GM10248 (cell line): ENCODE measurements at regions of chr9 and their contacts with region 1.

Region 1: DNA sequence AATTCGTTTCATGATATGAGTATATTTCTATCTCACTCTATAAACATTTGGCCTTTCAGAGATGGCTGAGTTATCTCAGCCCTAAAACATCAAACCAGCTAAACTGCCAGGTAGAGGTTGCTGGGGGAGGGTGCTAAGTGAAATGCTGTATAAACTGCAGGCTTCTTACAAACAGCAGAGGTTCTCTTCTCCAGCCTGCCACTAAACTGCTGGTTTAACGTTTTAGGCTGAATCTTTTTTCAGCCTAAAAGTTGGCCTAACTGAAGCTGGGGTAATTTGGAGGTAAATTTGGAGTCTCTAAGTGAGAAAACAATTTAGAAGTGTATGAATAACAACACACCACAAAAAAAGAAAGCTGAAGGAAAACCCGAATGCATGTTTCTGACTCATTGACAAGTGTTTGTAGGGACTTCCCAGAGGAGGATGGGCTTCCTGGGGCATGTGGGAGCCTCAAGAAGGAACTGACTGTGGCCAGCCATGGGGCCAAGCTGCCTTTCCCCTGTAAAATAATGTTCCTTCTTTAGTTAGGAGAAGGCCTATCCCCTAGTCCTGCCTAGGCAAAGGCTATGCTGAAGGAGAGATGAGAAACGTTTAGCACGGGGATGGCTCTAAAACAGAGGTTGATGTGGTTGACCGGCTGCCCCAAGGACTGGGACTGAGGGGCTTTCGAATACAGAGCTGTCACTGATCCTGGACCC is 44.3 kb downstream of the SLC28A3 start:
- DNase-seq: peak; percentile 50
- CTCF ChIP-seq: no peak

Region 2: GRCh38 chr9:84230355-84231145 is 65.7 kb before region 1 on chr9:
- CTCF ChIA-PET with region 1: no interaction called
- POLR2A ChIA-PET with region 1: no interaction called
- DNase-seq: no peak
- CTCF ChIP-seq: no peak

Region 3: GRCh38 chr9:84285381-84285780 is 10.9 kb before region 1 on chr9:
- CTCF ChIA-PET with region 1: interaction called, 44 read pairs
- POLR2A ChIA-PET with region 1: no interaction called
- DNase-seq: peak; percentile 37
- CTCF ChIP-seq: no peak